Natural killer cell (primary cell): ENCODE measurements at regions of chr5 and their contacts with region 1.

Region 1: GRCh38 chr5:61408476-61409168 is 76.6 kb downstream of the ZSWIM6 start:
- DNase-seq: peak; percentile 97 to 99
- ATAC-seq: peak; percentile 97 to 98 (median 97)
- H3K4me3 ChIP-seq: peak overlapping the region; percentile 18
- H3K4me3 Mint-ChIP-seq: peak overlapping the region; percentile 74
- H3K27ac ChIP-seq: peak overlapping the region; percentile 44
- H3K27ac Mint-ChIP-seq: peak overlapping the region; percentile 91 to 92
- H3K4me1 ChIP-seq: no peaks in the 10 kb centered on the region
- H3K4me1 Mint-ChIP-seq: peaks cover 23 to 32% of the 10 kb centered on the region in 2 donors
- H3K27me3 ChIP-seq: no peaks in the 10 kb centered on the region
- H3K27me3 Mint-ChIP-seq: no peaks in the 10 kb centered on the region
- CTCF ChIP-seq: no peak

Region 2: DNA sequence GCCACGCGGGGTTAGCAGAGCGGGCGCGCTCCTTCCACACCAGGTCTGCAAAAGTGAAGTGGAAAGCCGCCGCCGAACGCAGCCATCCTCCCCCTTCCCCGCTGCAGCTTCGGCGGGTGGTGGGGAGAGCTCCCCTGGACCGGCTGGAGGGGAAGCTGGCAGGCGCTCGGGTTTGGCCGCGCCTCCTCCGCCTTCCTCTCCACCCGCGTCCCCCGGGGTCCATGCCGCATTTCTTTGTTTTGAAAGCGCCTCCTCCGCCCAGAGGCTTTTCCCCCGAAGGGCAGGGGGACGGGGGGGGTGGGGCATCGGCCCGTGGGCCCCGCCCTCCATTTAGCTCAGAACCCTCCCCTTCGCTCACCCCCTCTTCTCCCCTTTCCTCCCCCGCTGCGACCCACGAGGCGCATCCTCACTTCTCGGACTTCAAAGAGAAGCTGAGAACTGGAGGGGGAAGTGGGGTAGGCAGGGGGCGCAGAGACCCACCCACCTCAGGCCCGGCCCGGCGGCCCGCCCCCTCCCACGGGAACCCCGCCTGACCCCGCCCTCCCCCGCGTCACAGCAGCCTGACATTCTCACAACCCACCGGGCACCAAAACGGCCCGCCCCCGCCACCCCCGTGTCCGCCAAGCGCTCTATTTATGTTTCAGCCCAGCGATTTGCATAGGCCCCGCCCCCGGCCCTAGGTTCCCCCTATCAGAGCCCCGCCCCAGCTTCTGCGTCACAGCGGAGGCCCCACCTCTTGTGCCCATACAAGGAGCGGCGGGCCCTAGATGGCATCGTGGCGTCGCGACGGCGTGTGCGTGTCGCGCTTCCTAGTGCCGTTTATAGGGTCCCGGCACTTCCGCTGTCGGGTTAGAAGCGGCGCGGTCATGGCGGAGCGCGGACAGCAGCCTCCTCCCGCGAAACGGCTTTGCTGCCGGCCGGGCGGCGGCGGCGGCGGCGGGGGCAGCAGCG is 76.9 kb before region 1 on chr5 and contains the start of gene ZSWIM6:
- intact Hi-C with region 1: loop called (anchors 1 kb)
- DNase-seq: peak; percentile 99 to 100
- ATAC-seq: peak; percentile 82 to 95 (median 84)
- H3K4me3 ChIP-seq: peak within 1 kb of the TSS; percentile 97
- H3K4me3 Mint-ChIP-seq: peak within 1 kb of the TSS; percentile 97
- H3K27ac ChIP-seq: peak within 1 kb of the TSS; percentile 94
- H3K27ac Mint-ChIP-seq: peak within 1 kb of the TSS; percentile 90 to 99
- H3K4me1 ChIP-seq: peaks cover 22% of the 10 kb centered on the region
- H3K4me1 Mint-ChIP-seq: peaks cover 46 to 53% of the 10 kb centered on the region in 2 donors
- H3K27me3 ChIP-seq: no peaks in the 10 kb centered on the region
- H3K27me3 Mint-ChIP-seq: peaks cover 16 to 38% of the 10 kb centered on the region in 2 donors
- CTCF ChIP-seq: no peak
- total RNA-seq, gene ZSWIM6: 8.7 to 11.4 (median 10.5) TPM

Region 3: GRCh38 chr5:61525512-61526206 is 117.0 kb after region 1 on chr5:
- intact Hi-C with region 1: no loop called
- DNase-seq: no peak
- ATAC-seq: no peak
- H3K4me3 ChIP-seq: no peak overlapping the region
- H3K4me3 Mint-ChIP-seq: no peak overlapping the region
- H3K27ac ChIP-seq: no peak overlapping the region
- H3K27ac Mint-ChIP-seq: no peak overlapping the region
- H3K4me1 ChIP-seq: no peaks in the 10 kb centered on the region
- H3K4me1 Mint-ChIP-seq: peaks cover 0 to 5% of the 10 kb centered on the region in 2 donors
- H3K27me3 ChIP-seq: no peaks in the 10 kb centered on the region
- H3K27me3 Mint-ChIP-seq: no peaks in the 10 kb centered on the region
- CTCF ChIP-seq: no peak